Sigmoid colon (tissue), 7 donors: ENCODE measurements at regions of chr19 and their contacts with region 1.

Region 1: DNA sequence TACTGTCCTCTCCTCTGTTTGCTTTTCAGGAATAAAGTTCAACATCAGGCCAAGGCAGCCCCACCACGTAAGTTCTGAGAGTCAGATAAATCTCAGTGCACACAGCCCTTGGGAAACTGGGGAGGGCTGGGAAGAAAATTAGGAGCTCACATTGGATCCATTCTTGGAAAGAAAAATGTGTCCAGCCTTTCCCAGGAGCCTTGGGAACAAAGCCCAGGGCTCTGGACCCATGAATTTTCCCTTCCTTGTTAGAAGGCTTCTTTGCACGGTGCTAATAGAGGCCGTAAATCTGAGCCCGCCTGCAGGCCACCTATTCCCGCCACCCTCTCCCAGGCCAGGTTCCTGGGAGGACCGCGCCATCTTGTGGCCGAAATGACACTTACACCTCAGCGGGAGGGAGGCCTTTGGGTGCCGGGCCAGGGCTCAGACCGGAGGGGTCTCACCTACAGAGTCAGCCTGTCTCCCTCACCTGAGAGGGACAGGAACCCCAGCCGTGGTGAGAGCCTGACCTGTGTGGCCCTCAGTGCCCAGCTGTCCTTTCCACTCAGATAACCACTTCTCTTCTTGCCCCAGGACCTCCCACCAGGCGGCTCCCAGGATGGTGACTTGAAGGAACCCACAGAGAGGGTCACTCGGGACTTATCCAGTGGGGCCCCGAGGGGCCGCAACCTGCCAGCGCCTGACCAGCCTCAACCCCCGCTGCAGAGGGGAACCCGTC is 25.1 kb upstream of the KCTD15 start:
- DNase-seq: peak; percentile 81
- H3K4me3 ChIP-seq: no peak overlapping the region
- H3K27ac ChIP-seq: no peak overlapping the region
- H3K4me1 ChIP-seq: peaks cover 0 to 8% (median 1%) of the 10 kb centered on the region in 4 donors
- H3K27me3 ChIP-seq: peaks cover 0 to 24% (median 8%) of the 10 kb centered on the region in 3 donors
- CTCF ChIP-seq: peak; percentile 69 to 81 (median 75)
- EP300 ChIP-seq: no peak
- POLR2A ChIP-seq: no peak

Region 2: GRCh38 chr19:33416307-33417215 is 355.0 kb before region 1 on chr19:
- intact Hi-C with region 1: loop called (anchors 5 kb)
- DNase-seq: peak; percentile 77
- H3K4me3 ChIP-seq: peak overlapping the region in 1 of 4 donors; percentile 23
- H3K27ac ChIP-seq: peak overlapping the region in 1 of 4 donors; percentile 31
- H3K4me1 ChIP-seq: peaks cover 0 to 16% (median 12%) of the 10 kb centered on the region in 4 donors
- H3K27me3 ChIP-seq: no peaks in the 10 kb centered on the region
- CTCF ChIP-seq: peak in 3 of 4 experiments; percentile 32 to 64 (median 45)
- EP300 ChIP-seq: no peak
- POLR2A ChIP-seq: no peak

Region 3: GRCh38 chr19:33430674-33431277 is 340.8 kb before region 1 on chr19:
- intact Hi-C with region 1: loop called (anchors 1 kb)
- DNase-seq: peak; percentile 69
- H3K4me3 ChIP-seq: no peak overlapping the region
- H3K27ac ChIP-seq: no peak overlapping the region
- H3K4me1 ChIP-seq: peaks cover 0 to 18% (median 10%) of the 10 kb centered on the region in 4 donors
- H3K27me3 ChIP-seq: no peaks in the 10 kb centered on the region
- CTCF ChIP-seq: peak in 2 of 4 experiments; percentile 53 to 60
- EP300 ChIP-seq: no peak
- POLR2A ChIP-seq: no peak

Region 4: DNA sequence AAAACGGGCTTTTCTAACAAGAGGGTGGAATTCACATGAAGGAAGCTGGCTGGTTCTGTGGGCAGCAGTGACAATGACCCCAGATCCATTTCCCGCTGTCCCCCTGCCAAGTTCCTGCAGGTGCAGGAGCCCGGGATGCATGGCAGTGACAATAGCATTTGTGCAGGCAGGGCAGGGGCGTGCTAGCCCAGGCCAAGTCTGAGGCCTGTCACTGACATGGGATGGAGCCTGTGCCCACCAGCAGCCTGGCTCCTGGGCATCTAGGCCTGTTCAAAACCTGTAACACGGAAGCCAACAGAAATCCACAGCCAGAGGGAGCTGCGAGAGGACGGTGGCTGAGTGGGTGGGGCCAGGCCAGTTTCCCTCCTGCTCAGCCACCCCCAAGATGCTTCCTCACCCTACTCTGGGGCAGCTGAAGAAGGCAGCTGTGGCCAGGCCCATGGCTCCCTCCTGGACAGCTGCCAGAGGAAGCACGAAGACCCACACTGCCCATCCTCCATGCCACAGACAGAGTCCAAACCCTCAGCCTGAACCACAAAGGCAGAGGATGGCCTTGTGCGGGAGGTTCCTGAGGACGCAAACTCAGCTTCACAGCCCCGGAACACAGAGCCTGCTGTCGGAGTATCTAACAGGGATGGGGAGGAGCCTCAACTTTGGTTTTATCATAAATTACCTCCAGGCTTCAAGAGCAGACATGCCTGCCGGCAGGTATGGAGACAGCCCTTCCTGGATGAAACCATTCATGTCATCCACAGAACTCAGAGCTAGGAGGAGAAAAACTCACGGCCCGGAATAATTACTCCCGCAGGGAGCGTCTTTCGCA is 324.0 kb before region 1 on chr19:
- intact Hi-C with region 1: no loop called
- DNase-seq: peak; percentile 60
- H3K4me3 ChIP-seq: no peak overlapping the region
- H3K27ac ChIP-seq: no peak overlapping the region
- H3K4me1 ChIP-seq: no peaks in the 10 kb centered on the region
- H3K27me3 ChIP-seq: no peaks in the 10 kb centered on the region
- CTCF ChIP-seq: no peak
- EP300 ChIP-seq: no peak
- POLR2A ChIP-seq: no peak

Region 5: DNA sequence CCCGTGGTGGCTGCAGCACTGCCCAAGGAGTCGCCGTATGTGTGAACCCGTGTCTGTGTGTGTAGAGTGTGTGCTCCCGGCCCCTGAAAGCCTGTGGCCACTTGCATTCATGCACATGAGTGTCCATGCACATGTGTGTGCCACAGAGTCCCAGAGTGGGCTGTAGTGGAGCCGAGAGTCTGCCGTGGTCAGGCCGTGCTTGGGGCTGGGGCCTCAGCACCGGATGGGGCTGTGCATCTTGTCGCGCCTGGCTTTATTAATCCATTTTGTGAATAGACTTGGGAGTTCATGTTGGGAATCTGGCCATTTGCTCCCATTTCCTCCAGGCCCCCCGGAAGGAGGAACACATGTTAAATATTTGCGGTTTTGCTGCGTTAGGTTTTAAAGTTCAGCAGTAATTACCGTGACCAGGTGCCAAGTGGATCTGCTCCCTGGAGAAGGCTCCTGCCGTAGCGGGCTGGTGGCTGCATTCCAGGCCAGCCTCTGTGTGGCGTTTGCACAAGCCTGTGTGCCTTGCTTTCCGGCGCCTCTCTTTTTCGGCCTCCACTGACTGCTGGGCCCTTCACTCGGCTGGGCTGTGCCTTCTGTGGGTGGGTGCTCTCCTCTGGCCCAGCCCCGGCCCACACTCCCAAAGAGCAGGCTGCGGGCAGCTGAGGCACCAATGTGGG is 44.1 kb before region 1 on chr19:
- intact Hi-C with region 1: no loop called
- DNase-seq: no peak
- H3K4me3 ChIP-seq: no peak overlapping the region
- H3K27ac ChIP-seq: no peak overlapping the region
- H3K4me1 ChIP-seq: no peaks in the 10 kb centered on the region
- H3K27me3 ChIP-seq: peaks cover 0 to 14% (median 0%) of the 10 kb centered on the region in 3 donors
- CTCF ChIP-seq: no peak
- EP300 ChIP-seq: no peak
- POLR2A ChIP-seq: no peak